ENCODE measurements at regions of chr5 and their contacts with region 1.

Region 1: DNA sequence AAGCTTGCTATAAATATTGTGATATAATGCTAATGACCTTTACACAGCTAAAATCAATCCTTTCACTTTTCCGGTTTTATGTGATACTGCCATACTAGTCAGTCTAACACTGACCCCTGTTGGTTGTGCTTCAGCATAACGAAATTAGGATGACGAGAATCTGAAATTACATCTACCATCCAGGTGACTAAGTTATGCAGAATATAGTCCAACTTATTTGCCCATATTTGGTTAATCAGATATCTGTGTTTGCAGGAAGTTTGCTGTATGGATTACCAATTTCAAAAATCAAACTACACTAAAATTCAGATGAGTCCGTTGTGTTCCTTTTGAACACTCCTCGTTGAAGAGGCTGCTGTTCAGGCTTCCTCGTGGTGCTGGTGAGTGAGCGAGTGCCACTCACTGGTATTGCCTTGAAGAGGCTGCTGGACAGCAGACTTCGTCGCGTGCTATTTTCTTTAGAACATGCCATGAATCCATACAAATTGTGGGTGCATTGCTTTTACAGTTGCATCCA is 32.5 kb downstream of the TENT4A start:
- DNase-seq: peak; percentile 69
- CTCF ChIP-seq: peak; percentile 61

Region 2: GRCh38 chr5:6632917-6633468 is 112.8 kb before region 1 on chr5 and contains the starts of genes NSUN2 and SRD5A1:
- CTCF ChIA-PET with region 1: interaction called, 12 read pairs
- POLR2A ChIA-PET with region 1: no interaction called
- DNase-seq: peak; percentile 99
- CTCF ChIP-seq: no peak

Region 3: DNA sequence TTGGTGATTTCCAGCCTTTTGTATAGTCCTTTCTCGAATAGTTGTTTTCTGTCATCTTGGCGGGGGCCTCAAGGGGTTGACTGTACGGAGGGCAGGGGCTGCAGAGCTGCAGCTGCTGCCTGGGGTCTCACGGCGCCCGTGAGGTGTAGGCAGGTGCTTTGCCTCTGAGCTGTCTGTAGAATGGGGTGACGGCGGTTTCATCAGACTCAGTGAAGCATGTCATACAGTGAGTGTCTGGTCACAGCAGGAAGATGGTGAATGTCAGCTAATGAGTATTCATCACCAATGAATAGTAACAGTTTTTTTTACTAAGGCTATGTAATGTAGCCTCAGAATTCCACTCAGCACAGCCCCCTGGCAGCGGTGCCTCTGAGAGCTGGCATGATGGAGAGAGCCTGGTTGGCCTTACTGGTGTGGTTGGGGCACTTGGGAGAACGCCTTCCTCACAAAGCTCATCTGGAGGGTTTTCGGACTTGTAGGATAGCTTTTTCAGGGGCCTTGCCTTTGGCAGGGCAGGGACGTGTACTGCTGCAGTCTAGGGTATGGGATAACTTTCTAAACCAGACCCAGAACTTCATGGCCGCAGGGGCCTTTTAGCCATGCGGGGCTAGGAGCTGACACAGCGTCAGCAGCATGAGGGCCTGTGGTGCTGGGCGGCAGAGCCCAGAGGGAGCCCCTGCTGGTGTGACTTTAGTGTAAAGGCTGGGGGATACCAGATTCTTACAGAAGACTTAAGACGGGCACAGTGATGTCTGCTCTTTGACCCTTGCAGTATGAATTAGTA is 17.6 kb before region 1 on chr5:
- CTCF ChIA-PET with region 1: interaction called, 17 read pairs
- POLR2A ChIA-PET with region 1: no interaction called
- DNase-seq: peak; percentile 76
- CTCF ChIP-seq: no peak

Region 4: GRCh38 chr5:6759413-6759812 is 13.6 kb after region 1 on chr5:
- CTCF ChIA-PET with region 1: interaction called, 22 read pairs
- POLR2A ChIA-PET with region 1: no interaction called
- DNase-seq: no peak
- CTCF ChIP-seq: no peak

Measured in GM10248 (cell line).